ENCODE measurements at regions of chr1 and their contacts with region 1.

Region 1: DNA sequence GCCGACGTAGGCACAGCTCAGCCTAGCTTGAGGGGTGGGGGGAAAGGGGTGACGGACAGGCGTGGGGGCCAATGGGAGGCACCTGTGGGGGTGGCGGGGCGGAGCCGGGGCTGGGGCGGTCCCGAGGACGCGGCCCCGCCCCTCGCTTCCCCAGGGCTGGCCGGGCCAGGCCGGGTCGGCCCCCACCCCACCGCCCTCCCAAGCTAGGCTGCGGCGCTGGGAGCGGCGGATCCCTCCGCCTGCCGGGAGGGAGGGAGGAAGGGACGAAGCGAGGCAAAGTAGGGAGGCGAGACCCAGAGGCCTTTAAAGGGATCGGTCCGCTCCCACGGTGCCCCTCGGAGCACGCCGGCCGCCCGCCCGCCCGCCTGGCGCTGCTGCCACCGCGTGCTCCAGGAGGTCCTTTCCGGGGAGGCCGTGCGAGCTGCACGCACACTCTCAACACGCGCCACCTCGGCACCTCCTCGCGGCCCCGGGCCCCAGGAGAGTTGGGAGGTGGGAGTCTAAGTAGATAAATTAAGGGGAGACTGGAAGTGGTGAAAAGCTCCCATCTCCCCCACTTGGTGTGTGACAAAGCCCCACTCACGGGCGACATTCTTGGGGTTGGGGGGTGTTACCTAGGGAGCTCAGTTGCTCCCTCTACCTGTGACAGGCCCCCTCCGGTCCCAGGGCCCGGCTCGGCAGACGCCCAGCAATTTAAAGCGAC is 373 bp upstream of the MEF2D start:
- DNase-seq: peak; percentile 92 to 97
- H3K4me3 ChIP-seq: peak overlapping the region; percentile 78 to 99
- H3K27ac ChIP-seq: peak overlapping the region; percentile 94 to 100
- H3K4me1 ChIP-seq: peaks cover 0 to 74% (median 62%) of the 10 kb centered on the region in 4 donors
- H3K27me3 ChIP-seq: no peaks in the 10 kb centered on the region
- CTCF ChIP-seq: peak in 1 of 2 experiments; percentile 37

Region 2: DNA sequence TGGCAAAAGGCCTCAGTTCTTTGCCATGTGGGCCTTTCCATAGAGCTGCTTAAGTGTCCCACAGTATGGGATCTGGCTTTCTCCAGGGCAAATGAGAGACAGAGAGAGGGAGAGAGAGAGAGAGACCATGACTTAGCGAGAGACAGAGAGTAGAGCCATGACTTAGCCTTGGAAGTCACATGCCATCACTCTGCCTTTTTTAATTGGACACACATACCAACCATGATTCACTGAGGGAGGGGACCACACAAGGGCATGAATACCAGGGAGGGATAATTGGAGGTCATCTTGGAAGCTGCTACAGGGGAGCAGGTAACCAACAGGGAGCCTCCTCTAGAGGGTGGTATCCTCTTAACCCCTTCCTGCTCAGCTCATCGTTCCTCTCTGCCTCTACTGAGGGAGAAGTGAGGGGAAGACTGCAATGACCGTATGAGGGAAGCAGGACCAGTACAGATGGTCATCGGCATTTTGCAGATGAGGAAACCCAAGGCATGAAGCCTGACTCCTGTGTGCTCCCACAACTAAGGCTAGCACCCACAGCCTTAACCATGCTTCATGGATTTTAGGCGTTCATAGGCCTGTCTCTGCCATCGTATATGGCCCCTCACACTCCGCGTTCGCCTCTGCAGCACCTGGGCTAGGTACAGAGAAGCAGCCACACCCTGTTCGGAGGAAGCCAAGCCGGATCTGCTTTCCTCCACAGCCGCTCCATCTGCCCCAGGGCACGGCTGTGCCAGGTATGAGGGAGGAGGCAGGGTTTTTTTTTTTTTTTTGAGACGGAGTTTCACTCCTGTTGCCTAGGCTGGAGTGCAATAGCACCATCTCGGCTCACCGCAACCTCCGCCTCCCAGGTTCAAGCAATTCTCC is 38.9 kb before region 1 on chr1:
- intact Hi-C with region 1: loop called (anchors 5 kb)
- DNase-seq: no peak
- H3K4me3 ChIP-seq: no peak overlapping the region
- H3K27ac ChIP-seq: peak overlapping the region; percentile 91 to 94
- H3K4me1 ChIP-seq: peaks cover 5 to 73% (median 52%) of the 10 kb centered on the region in 4 donors
- H3K27me3 ChIP-seq: no peaks in the 10 kb centered on the region
- CTCF ChIP-seq: no peak

Region 3: GRCh38 chr1:156476501-156477298 is 24.2 kb before region 1 on chr1:
- intact Hi-C with region 1: loop called (anchors 2 kb)
- DNase-seq: peak; percentile 62 to 87
- H3K4me3 ChIP-seq: peak overlapping the region in 1 of 2 donors; percentile 8
- H3K27ac ChIP-seq: peak overlapping the region; percentile 91 to 94
- H3K4me1 ChIP-seq: peaks cover 13 to 100% (median 81%) of the 10 kb centered on the region in 4 donors
- H3K27me3 ChIP-seq: no peaks in the 10 kb centered on the region
- CTCF ChIP-seq: no peak

Region 4: GRCh38 chr1:156591432-156592157 is 90.6 kb after region 1 on chr1 and contains the start of gene NAXE:
- intact Hi-C with region 1: loop called (anchors 5 kb)
- DNase-seq: peak; percentile 55 to 82
- H3K4me3 ChIP-seq: peak within 1 kb of the TSS; percentile 63 to 80
- H3K27ac ChIP-seq: peak within 1 kb of the TSS; percentile 75 to 88
- H3K4me1 ChIP-seq: peaks cover 0 to 19% (median 12%) of the 10 kb centered on the region in 4 donors
- H3K27me3 ChIP-seq: no peaks in the 10 kb centered on the region
- CTCF ChIP-seq: no peak